Naive thymus-derived CD4-positive, alpha-beta T cell (primary cell): ENCODE measurements at regions of chr17 and their contacts with region 1.

Region 1: DNA sequence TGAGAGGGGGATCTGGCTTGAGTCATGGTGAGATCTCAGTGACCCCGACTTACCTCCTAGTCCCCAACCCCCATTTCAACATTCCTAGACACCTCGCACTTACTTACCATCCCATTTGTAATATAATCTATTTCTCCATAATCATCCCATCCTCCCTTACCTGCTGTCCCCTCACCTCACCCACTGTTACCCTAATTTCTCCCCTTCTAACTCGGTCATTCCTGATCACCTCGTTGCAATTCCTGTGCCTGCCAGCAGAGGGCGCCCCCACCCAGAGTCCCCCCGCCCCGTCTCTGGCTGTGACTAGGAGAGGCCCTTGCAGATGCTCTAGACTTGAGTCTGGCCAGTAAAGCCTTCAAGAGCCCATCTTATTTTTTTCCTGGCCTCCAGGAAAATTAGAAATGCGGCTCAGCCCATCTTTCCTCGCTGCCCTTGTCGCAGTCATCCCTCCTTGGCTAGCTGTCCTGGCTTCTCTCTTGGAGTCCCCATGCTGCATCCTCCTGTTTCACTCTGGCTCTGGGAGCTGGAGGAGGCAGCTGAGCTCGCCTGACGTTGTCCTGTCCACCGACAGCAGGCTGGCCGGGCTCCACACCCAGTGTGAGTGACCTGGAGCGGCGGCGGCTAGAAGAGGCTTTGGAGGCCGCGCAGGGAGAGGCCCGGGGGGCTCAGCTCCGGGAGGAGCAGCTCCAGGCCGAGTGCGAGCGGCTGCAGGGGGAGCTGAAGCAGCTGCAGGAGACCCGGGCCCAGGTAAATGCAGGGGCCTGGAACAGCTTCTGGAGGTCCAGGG is 5.0 kb downstream of the TBKBP1 start:
- DNase-seq: peak; percentile 34 to 82 (median 63)
- ATAC-seq: peak; percentile 70
- H3K4me3 ChIP-seq: no peak overlapping the region
- H3K4me3 Mint-ChIP-seq: peak overlapping the region in 1 of 10 donors; percentile 29
- H3K27ac ChIP-seq: no peak overlapping the region
- H3K27ac Mint-ChIP-seq: peak overlapping the region in 2 of 9 donors; percentile 38 to 78
- H3K4me1 ChIP-seq: peaks cover 17 to 43% of the 10 kb centered on the region in 2 donors
- H3K4me1 Mint-ChIP-seq: peaks cover 19 to 54% (median 27%) of the 10 kb centered on the region in 7 donors
- H3K27me3 ChIP-seq: no peaks in the 10 kb centered on the region
- H3K27me3 Mint-ChIP-seq: peaks cover 0 to 3% (median 0%) of the 10 kb centered on the region in 5 donors

Region 2: GRCh38 chr17:47663912-47664625 is 34.9 kb before region 1 on chr17:
- CTCF ChIA-PET with region 1: interaction called, 21 read pairs
- POLR2A ChIA-PET with region 1: interaction called, 5 read pairs
- intact Hi-C with region 1: loop called in 1 of 2 experiments (anchors 1 kb)
- DNase-seq: peak; percentile 19 to 65 (median 56)
- ATAC-seq: peak; percentile 81
- H3K4me3 ChIP-seq: no peak overlapping the region
- H3K4me3 Mint-ChIP-seq: peak overlapping the region in 3 of 10 donors; percentile 1 to 38 (median 25)
- H3K27ac ChIP-seq: peak overlapping the region; percentile 5
- H3K27ac Mint-ChIP-seq: peak overlapping the region; percentile 25 to 92 (median 66)
- H3K4me1 ChIP-seq: peaks cover 8 to 15% of the 10 kb centered on the region in 2 donors
- H3K4me1 Mint-ChIP-seq: peaks cover 8 to 48% (median 22%) of the 10 kb centered on the region in 7 donors
- H3K27me3 ChIP-seq: no peaks in the 10 kb centered on the region
- H3K27me3 Mint-ChIP-seq: no peaks in the 10 kb centered on the region

Region 3: DNA sequence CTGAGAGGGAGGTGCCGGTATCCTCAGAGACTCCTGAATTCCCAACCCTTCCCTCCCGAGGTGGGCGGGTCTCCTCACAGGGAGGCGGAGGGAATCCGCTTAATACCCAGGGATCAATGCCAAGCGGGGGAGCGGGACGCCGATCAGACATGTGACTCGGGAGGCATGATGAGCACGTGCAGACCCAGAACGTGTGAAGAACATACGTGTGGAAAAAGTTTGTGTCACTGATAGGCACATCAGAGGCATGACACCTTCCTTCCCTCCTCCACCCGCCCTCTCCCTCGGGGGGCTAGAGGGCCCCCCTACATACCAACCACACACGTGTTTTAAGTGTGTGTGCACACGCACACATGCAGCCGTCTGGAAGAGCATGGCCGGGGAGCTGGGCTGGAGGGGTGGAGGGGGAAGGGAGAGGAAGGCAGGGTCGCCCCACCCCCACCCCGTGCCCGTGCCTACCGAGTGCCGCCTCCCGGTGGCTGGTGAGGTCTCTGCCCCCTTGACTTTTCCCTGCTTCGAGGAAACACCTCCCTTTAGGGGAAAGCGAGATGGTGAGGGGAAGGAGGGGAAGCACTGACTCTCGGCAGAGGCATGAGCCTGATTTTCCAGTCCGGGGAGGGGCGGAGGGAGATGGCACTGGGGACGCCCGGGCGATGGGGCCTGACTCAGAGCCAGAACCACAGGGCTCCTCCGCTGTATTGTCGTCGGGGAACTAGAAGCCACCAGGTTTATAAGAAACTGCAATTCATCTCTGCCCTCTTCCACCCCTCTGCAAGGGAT is 22.0 kb after region 1 on chr17:
- CTCF ChIA-PET with region 1: interaction called, 9 read pairs
- POLR2A ChIA-PET with region 1: interaction called, 3 read pairs
- intact Hi-C with region 1: loop called (anchors 1 to 2 kb)
- DNase-seq: peak in 2 of 9 donors; percentile 69 to 93
- ATAC-seq: peak; percentile 69
- H3K4me3 ChIP-seq: peak overlapping the region; percentile 29
- H3K4me3 Mint-ChIP-seq: peak overlapping the region in 6 of 10 donors; percentile 53 to 64 (median 58)
- H3K27ac ChIP-seq: no peak overlapping the region
- H3K27ac Mint-ChIP-seq: peak overlapping the region in 5 of 9 donors; percentile 13 to 77 (median 70)
- H3K4me1 ChIP-seq: peaks cover 35 to 66% of the 10 kb centered on the region in 2 donors
- H3K4me1 Mint-ChIP-seq: peaks cover 18 to 74% (median 40%) of the 10 kb centered on the region in 7 donors
- H3K27me3 ChIP-seq: no peaks in the 10 kb centered on the region
- H3K27me3 Mint-ChIP-seq: peaks cover 0 to 7% (median under 1%) of the 10 kb centered on the region in 5 donors

Region 4: DNA sequence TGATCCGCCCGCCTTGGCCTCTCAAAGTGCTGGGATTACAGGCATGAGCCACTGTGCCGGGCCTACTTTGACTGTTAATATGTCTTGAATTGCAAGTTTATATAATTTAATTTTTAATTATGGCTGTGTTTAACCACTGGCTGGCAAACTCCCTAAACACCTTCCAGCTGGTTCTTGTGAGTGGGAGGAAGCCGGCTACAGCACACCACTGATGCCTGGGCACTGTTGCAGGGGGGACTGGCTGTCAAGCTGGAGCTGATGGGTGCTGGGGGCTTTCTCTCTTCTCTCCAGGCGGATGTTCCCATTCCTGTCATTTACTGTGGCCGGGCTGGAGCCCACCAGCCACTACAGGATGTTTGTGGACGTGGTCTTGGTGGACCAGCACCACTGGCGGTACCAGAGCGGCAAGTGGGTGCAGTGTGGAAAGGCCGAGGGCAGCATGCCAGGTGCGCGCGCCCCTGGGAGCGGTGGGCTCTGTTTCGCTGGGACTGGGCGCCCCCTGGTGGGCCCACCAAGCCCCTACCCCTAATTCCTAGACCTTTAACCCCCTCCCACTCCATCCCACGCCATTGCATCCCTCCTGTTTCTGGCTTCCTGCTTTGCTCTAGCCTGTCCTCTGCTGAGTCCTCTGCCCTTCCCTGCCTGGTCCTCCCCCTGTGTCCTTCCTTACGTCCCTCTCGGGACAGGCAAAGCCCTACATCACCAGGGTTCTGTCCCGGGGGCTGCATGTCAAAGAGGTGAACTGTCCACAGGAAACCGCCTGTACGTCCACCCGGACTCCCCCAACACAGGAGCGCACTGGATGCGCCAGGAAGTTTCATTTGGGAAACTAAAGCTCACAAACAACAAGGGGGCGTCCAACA is 43.6 kb after region 1 on chr17:
- CTCF ChIA-PET with region 1: interaction called, 6 read pairs
- POLR2A ChIA-PET with region 1: no interaction called
- intact Hi-C with region 1: loop called (anchors 1 kb)
- DNase-seq: peak; percentile 19 to 56 (median 40)
- ATAC-seq: peak; percentile 59
- H3K4me3 ChIP-seq: no peak overlapping the region
- H3K4me3 Mint-ChIP-seq: peak overlapping the region in 2 of 10 donors; percentile 25 to 43
- H3K27ac ChIP-seq: no peak overlapping the region
- H3K27ac Mint-ChIP-seq: no peak overlapping the region
- H3K4me1 ChIP-seq: peaks cover 0 to 41% of the 10 kb centered on the region in 2 donors
- H3K4me1 Mint-ChIP-seq: peaks cover 0 to 37% (median 12%) of the 10 kb centered on the region in 7 donors
- H3K27me3 ChIP-seq: no peaks in the 10 kb centered on the region
- H3K27me3 Mint-ChIP-seq: no peaks in the 10 kb centered on the region

Region 5: GRCh38 chr17:47776330-47777197 is 77.6 kb after region 1 on chr17:
- CTCF ChIA-PET with region 1: no interaction called
- POLR2A ChIA-PET with region 1: no interaction called
- intact Hi-C with region 1: no loop called
- DNase-seq: peak in 7 of 9 donors; percentile 17 to 59 (median 41)
- ATAC-seq: peak; percentile 85
- H3K4me3 ChIP-seq: no peak overlapping the region
- H3K4me3 Mint-ChIP-seq: no peak overlapping the region
- H3K27ac ChIP-seq: no peak overlapping the region
- H3K27ac Mint-ChIP-seq: peak overlapping the region in 1 of 9 donors; percentile 38
- H3K4me1 ChIP-seq: no peaks in the 10 kb centered on the region
- H3K4me1 Mint-ChIP-seq: peaks cover 0 to 5% (median 0%) of the 10 kb centered on the region in 7 donors
- H3K27me3 ChIP-seq: peaks cover 0 to 11% of the 10 kb centered on the region in 2 donors
- H3K27me3 Mint-ChIP-seq: peaks cover 35 to 60% (median 45%) of the 10 kb centered on the region in 5 donors

Region 6: DNA sequence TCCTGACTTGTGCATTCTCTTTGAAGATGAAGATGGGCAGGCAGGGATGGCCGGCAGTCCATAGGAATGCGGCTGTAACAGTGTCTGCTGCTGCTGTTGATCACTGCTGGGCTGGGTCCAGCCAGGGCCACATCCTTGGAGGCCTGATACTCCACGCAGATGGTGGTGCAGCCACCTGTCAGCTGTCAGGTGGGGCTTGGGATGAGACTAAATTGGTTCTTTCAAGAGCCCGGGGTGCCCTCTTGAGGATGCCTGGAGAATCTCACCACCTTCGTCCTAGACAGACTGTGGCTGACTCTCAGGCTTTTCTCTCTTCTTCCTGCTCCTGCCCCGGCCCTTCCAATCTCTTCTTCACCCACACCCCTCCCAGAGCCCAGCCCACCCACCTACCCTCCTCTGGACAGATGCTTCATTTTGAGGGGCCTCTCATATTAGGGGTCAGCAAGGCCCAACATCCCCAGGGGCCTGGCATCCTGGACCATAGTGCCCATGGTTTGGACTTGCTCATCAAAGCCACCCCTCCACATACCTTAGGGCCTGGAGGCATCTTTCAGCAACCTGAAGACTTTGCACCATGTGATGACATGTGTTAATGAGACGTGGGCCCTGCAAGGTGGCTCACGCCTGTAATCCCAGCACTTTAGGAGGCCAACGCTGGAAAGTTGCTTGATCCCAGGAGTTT is 103.5 kb after region 1 on chr17:
- CTCF ChIA-PET with region 1: interaction called, 4 read pairs
- POLR2A ChIA-PET with region 1: no interaction called
- intact Hi-C with region 1: loop called (anchors 1 kb)
- DNase-seq: peak in 8 of 9 donors; percentile 24 to 61 (median 50)
- ATAC-seq: peak; percentile 89
- H3K4me3 ChIP-seq: no peak overlapping the region
- H3K4me3 Mint-ChIP-seq: no peak overlapping the region
- H3K27ac ChIP-seq: no peak overlapping the region
- H3K27ac Mint-ChIP-seq: no peak overlapping the region
- H3K4me1 ChIP-seq: no peaks in the 10 kb centered on the region
- H3K4me1 Mint-ChIP-seq: peaks cover 0 to 4% (median 0%) of the 10 kb centered on the region in 7 donors
- H3K27me3 ChIP-seq: no peaks in the 10 kb centered on the region
- H3K27me3 Mint-ChIP-seq: peaks cover 0 to 9% (median 4%) of the 10 kb centered on the region in 5 donors

Region 7: DNA sequence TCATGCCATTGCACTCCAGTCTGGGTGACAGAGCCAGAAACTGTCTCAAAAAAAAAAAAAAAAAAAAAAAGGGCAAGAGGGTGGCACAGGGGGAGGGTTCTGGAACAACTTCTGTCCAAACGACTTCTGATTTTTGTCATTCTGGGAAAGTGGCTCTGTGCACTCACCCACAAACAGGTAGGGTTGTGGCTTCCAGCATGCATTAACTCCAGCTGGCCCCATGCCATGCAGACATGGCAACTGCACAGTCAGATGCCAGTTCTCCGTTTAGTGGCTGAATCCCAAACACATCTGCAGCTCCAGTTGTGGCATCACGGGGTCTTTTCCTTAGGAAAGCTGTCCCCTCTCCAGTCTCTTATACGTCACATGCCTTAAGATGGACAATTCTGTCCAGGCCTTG is 1463.9 kb after region 1 on chr17:
- CTCF ChIA-PET with region 1: no interaction called
- POLR2A ChIA-PET with region 1: no interaction called
- intact Hi-C with region 1: no loop called
- DNase-seq: no peak
- ATAC-seq: no peak
- H3K4me3 ChIP-seq: no peak overlapping the region
- H3K4me3 Mint-ChIP-seq: no peak overlapping the region
- H3K27ac ChIP-seq: no peak overlapping the region
- H3K27ac Mint-ChIP-seq: no peak overlapping the region
- H3K4me1 ChIP-seq: no peaks in the 10 kb centered on the region
- H3K4me1 Mint-ChIP-seq: peaks cover 0 to 1% (median 0%) of the 10 kb centered on the region in 7 donors
- H3K27me3 ChIP-seq: no peaks in the 10 kb centered on the region
- H3K27me3 Mint-ChIP-seq: peaks cover 28 to 51% (median 34%) of the 10 kb centered on the region in 5 donors